ENCODE measurements at regions of chr5 and their contacts with region 1.

Region 1: GRCh38 chr5:32174011-32174870 is at the start of gene GOLPH3:
- DNase-seq: peak; percentile 95
- H3K4me3 Mint-ChIP-seq: peak within 1 kb of the TSS; percentile 99
- H3K27ac Mint-ChIP-seq: peak within 1 kb of the TSS; percentile 99
- H3K4me1 Mint-ChIP-seq: peaks cover 40% of the 10 kb centered on the region
- H3K27me3 Mint-ChIP-seq: peaks cover 2% of the 10 kb centered on the region
- total RNA-seq, gene GOLPH3: 81.6 to 86.8 TPM

Region 2: GRCh38 chr5:32163785-32164184 is 10.5 kb before region 1 on chr5:
- CTCF ChIA-PET with region 1: interaction called, 3 read pairs
- POLR2A ChIA-PET with region 1: interaction called, 12 read pairs
- DNase-seq: no peak
- H3K4me3 Mint-ChIP-seq: no peak overlapping the region
- H3K27ac Mint-ChIP-seq: no peak overlapping the region
- H3K4me1 Mint-ChIP-seq: peaks cover 33% of the 10 kb centered on the region
- H3K27me3 Mint-ChIP-seq: no peaks in the 10 kb centered on the region

Region 3: DNA sequence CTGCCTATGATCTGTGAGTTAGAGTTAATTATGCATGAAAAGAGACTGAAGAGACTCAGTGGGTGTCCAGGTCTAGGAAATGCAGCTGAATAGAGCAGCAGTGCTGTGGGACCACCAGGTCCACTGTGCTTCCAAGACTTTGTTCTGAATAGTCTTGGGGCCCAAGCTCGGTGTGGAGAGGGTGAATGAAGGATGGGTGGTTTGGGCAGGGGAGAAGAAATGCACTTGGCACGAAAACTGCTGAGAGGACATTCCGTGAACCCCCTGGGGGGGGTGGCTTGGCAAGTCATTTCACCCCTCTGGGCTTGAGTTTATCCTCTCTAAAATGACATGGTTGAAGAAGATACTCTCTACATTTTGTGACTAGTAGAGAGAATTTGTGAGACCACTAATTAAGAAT is 35.9 kb after region 1 on chr5:
- CTCF ChIA-PET with region 1: no interaction called
- POLR2A ChIA-PET with region 1: interaction called, 38 read pairs
- DNase-seq: no peak
- H3K4me3 Mint-ChIP-seq: no peak overlapping the region
- H3K27ac Mint-ChIP-seq: peak overlapping the region; percentile 86
- H3K4me1 Mint-ChIP-seq: peaks cover 20% of the 10 kb centered on the region
- H3K27me3 Mint-ChIP-seq: no peaks in the 10 kb centered on the region

Region 4: GRCh38 chr5:32312647-32313523 is 138.6 kb after region 1 on chr5 and contains the start of gene MTMR12:
- CTCF ChIA-PET with region 1: interaction called, 3 read pairs
- POLR2A ChIA-PET with region 1: interaction called, 21 read pairs
- DNase-seq: peak; percentile 100
- H3K4me3 Mint-ChIP-seq: peak within 1 kb of the TSS; percentile 92
- H3K27ac Mint-ChIP-seq: peak within 1 kb of the TSS; percentile 86
- H3K4me1 Mint-ChIP-seq: peaks cover 40% of the 10 kb centered on the region
- H3K27me3 Mint-ChIP-seq: no peaks in the 10 kb centered on the region
- total RNA-seq, gene MTMR12: 28.6 to 29.6 TPM

Region 5: DNA sequence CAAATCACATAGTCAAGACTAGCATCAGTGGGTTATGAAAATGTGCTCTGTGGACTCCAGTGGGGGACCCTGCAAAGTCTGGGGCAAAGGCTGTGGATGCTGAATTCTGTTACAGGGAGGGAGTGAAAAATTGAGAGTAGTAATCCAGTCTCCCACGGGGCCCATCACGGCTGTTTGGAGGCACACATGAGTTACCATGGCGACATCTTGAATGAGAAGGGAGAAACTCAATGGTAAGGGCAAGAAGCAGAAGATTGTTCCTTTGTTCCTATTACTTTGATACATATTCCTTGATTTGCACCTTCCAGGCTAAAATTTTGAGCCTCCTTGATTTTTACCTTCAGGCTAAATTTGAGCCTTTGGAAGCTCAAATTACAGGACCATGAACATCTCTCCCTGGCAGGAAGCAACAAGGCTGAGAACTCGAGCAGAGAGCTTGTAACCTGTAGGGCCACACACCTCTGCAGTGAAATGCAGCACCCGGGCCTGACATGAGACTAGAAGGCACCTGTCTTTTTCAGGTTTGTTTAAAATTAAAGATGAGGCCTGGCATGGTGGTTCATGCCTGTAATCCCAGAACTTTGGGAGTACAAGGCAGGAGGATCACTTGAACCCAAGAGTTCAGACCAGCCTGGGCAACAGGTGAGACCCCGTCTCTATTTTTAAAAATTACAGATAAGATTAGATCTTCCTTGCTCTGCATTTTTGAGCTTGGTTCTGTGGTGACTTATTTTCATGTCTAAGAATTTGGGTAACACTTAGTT is 301.3 kb after region 1 on chr5:
- CTCF ChIA-PET with region 1: no interaction called
- POLR2A ChIA-PET with region 1: no interaction called
- DNase-seq: no peak
- H3K4me3 Mint-ChIP-seq: no peak overlapping the region
- H3K27ac Mint-ChIP-seq: no peak overlapping the region
- H3K4me1 Mint-ChIP-seq: no peaks in the 10 kb centered on the region
- H3K27me3 Mint-ChIP-seq: no peaks in the 10 kb centered on the region

Region 6: DNA sequence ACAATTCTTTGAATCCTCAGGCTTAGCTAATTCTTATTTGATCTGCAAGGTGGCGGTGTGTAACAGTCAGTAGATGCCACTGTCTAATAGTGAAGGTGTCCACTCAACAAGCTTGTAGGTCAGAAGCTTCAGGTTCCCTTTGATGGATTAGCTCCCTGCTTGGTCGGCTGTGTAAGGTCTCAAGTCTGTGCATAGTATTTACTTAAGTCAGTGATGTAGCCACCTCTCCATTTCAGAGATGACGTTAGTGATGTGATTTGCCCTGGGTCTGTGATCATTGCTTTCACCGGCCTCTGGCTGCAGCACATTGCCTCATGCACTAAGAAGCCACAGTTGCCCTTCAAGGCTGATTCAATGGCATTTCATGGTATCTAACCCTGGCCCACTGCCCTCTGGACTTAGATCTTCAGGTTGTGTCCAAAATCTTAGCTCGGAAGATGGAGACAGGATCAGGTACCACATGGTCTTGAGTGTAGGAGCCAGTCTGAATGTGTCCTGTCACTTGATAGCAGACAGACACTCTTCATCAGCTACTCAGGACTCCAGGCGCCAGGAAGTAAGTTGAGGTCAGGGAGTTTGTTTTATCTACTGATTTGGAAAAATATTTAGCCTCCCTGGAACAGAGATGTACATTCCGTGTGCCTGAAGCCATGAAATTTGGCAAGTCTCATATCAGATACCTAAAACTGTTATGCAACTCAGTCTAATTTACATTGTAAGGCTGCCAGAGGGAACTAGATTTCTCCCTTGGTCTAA is 454.0 kb after region 1 on chr5:
- CTCF ChIA-PET with region 1: no interaction called
- POLR2A ChIA-PET with region 1: no interaction called
- DNase-seq: no peak
- H3K4me3 Mint-ChIP-seq: no peak overlapping the region
- H3K27ac Mint-ChIP-seq: no peak overlapping the region
- H3K4me1 Mint-ChIP-seq: no peaks in the 10 kb centered on the region
- H3K27me3 Mint-ChIP-seq: peaks cover 4% of the 10 kb centered on the region